Tibial artery (tissue), 4 donors: ENCODE measurements at regions of chr5 and their contacts with region 1.

Region 1: DNA sequence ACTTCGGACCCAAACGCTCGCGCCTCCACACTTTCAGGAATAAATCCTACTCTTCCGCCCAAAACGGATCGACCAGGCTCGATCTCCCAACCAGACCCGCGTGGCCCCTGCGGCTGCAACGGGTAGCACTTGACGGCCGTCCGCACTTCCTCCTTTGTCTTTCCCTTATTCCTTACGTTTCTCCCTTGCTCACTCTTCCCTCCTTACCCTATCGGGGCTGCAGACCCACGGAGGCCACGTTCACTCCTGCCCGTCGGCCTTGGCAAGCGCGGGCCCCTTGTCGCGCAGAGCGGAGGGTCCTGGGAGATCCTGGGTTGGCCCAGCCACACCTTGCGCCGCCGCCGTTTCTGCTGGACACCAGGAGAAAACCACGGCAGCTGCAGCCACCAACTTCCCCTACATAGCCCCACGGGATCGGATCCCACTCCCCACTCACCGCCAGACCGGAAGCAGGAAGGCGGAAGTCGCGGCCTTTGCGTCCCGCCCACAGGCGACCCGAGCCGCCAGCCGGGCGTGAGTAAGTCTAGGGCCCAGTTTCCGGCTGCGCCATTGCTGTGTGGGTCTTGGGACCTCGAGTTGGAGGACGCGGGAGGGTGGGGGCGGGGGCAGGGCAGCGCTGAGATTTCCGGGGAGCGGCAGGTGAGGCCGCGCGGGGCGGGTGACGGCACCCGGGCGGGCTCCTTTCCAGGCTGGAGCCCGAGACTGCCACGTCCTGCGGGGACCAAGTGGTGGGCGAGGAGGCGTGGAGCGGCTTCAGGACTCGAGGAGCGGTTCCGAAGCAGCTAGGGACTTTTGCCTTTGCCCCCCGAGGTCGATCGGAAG is at the start of gene SMIM15:
- DNase-seq: peak; percentile 86 to 91
- H3K4me3 ChIP-seq: peak within 1 kb of the TSS; percentile 78
- H3K27ac ChIP-seq: peak within 1 kb of the TSS; percentile 91 to 92
- H3K4me1 ChIP-seq: peaks cover 0 to 35% (median 8%) of the 10 kb centered on the region in 4 donors
- H3K27me3 ChIP-seq: no peaks in the 10 kb centered on the region
- CTCF ChIP-seq: peak in 1 of 2 experiments; percentile 10

Region 2: GRCh38 chr5:60944904-60945812 is 217.1 kb before region 1 on chr5 and contains the starts of genes ERCC8 and NDUFAF2:
- intact Hi-C with region 1: loop called (anchors 10 kb)
- DNase-seq: peak; percentile 92 to 94
- H3K4me3 ChIP-seq: peak within 1 kb of the TSS; percentile 68 to 86
- H3K27ac ChIP-seq: peak within 1 kb of the TSS; percentile 78 to 89
- H3K4me1 ChIP-seq: peaks cover 0 to 20% (median 4%) of the 10 kb centered on the region in 4 donors
- H3K27me3 ChIP-seq: no peaks in the 10 kb centered on the region
- CTCF ChIP-seq: no peak

Region 3: GRCh38 chr5:61280205-61280604 is 118.0 kb after region 1 on chr5:
- intact Hi-C with region 1: loop called (anchors 5 kb)
- DNase-seq: no peak
- H3K4me3 ChIP-seq: no peak overlapping the region
- H3K27ac ChIP-seq: no peak overlapping the region
- H3K4me1 ChIP-seq: no peaks in the 10 kb centered on the region
- H3K27me3 ChIP-seq: no peaks in the 10 kb centered on the region
- CTCF ChIP-seq: no peak